Calu3 (cell line): ENCODE measurements at regions of chr1 and their contacts with region 1.

Region 1: DNA sequence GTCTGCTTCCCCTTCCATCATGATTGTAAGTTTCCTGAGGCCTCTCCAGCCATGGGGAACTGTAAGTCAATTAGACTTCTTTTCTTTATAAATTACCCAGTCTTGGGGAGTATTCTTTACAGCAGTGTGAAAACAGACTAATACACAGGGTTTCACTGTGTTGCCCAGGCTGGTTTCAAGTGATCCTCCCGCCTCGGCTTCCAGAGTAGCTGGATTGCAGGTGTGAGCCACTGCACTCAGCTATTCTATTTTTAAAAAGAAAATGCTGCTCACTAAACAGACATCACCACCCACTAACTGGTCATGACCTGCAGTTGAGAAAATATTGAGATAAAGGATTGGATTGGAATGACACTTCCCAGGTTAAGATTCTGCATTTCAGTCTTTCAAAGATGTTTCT is 20.8 kb upstream of the SLC2A7 start:
- DNase-seq: no peak
- H3K4me3 Mint-ChIP-seq: no peak overlapping the region
- H3K27ac Mint-ChIP-seq: no peak overlapping the region
- H3K4me1 Mint-ChIP-seq: no peaks in the 10 kb centered on the region
- H3K27me3 Mint-ChIP-seq: peaks cover 10% of the 10 kb centered on the region
- CTCF ChIP-seq: no peak

Region 2: GRCh38 chr1:8844501-8845006 is 202.5 kb before region 1 on chr1:
- CTCF ChIA-PET with region 1: no interaction called
- intact Hi-C with region 1: no loop called
- DNase-seq: no peak
- H3K4me3 Mint-ChIP-seq: no peak overlapping the region
- H3K27ac Mint-ChIP-seq: no peak overlapping the region
- H3K4me1 Mint-ChIP-seq: peaks cover 6% of the 10 kb centered on the region
- H3K27me3 Mint-ChIP-seq: no peaks in the 10 kb centered on the region
- CTCF ChIP-seq: no peak

Region 3: GRCh38 chr1:9057846-9058245 is 10.8 kb after region 1 on chr1:
- CTCF ChIA-PET with region 1: interaction called, 11 read pairs
- intact Hi-C with region 1: no loop called
- DNase-seq: no peak
- H3K4me3 Mint-ChIP-seq: no peak overlapping the region
- H3K27ac Mint-ChIP-seq: no peak overlapping the region
- H3K4me1 Mint-ChIP-seq: no peaks in the 10 kb centered on the region
- H3K27me3 Mint-ChIP-seq: no peaks in the 10 kb centered on the region
- CTCF ChIP-seq: no peak